HepG2 (cell line): ENCODE measurements at regions of chr17 and their contacts with region 1.

Region 1: GRCh38 chr17:57855391-57856035 is 5.7 kb upstream of the MRPS23 start:
- DNase-seq: peak; percentile 90
- ATAC-seq: peak; percentile 58
- H3K4me3 ChIP-seq: peak overlapping the region; percentile 8 to 51 (median 20); a peak in 5 of 6 replicates
- H3K27ac ChIP-seq: peak overlapping the region; percentile 77
- H3K4me1 ChIP-seq: peaks cover 92% of the 10 kb centered on the region
- H3K27me3 ChIP-seq: no peaks in the 10 kb centered on the region; a peak in 1 of 5 replicates
- CTCF ChIP-seq: peak; percentile 4; the same call in 1 of the 2 replicates
- EP300 ChIP-seq: peak in 1 of 2 experiments; percentile 92; a peak in 2 of 4 replicates
- POLR2A ChIP-seq: no peak
- RAD21 ChIP-seq: no peak

Region 2: GRCh38 chr17:58112970-58113631 is 257.6 kb after region 1 on chr17:
- CTCF ChIA-PET with region 1: interaction called, 13 read pairs
- POLR2A ChIA-PET with region 1: no interaction called
- in situ Hi-C with region 1: loop called (anchors 10 kb)
- intact Hi-C with region 1: loop called (anchors 2 kb)
- DNase-seq: peak; percentile 70
- ATAC-seq: peak; percentile 84
- H3K4me3 ChIP-seq: no peak overlapping the region
- H3K27ac ChIP-seq: no peak overlapping the region
- H3K4me1 ChIP-seq: no peaks in the 10 kb centered on the region
- H3K27me3 ChIP-seq: peaks cover 1 to 4% of the 10 kb centered on the region in 2 experiments; a peak in 3 of 5 replicates
- CTCF ChIP-seq: peak; percentile 98
- EP300 ChIP-seq: no peak
- POLR2A ChIP-seq: no peak
- RAD21 ChIP-seq: peak; percentile 93